ENCODE measurements at regions of chr14 and their contacts with region 1.

Region 1: DNA sequence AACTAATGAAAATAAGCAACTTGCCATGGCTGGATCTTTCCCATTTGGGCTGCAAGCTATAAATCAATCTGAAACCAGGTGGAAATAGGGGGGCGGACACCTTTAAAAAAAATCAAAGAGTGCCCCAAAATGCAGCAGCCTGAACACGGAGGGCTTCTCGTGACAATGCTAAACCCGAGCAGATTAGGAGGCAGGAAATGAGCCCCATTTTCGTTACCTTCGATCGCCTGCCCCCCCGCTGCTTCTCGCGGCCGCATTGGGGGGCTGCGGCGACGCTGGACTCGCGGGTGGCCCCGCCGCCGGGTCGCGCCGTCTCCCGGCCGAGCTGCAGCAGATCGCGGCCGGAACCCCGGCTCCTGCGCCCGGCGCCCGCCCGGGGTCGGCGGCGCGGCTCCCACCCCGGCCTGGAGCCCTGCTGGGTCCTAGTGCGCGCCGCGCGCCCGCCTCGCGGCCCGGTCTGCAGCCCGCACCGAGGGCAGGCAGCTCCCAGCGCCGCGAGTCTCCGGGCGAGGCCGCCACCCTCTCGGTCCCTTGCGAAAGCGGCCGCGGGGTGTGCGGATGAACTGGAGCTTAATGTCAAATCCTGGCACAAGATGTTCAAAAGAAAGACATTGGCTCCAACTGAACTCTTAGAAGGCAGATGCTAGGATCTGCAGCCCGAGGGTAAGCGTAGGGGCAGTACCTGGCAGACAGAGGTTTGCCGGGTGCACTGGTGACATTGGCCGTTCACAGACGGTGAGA is 201.9 kb upstream of the FOXN3 start:
- DNase-seq: peak; percentile 92
- H3K4me3 Mint-ChIP-seq: peak overlapping the region; percentile 97
- H3K27ac Mint-ChIP-seq: peak overlapping the region; percentile 97
- H3K4me1 Mint-ChIP-seq: peaks cover 68% of the 10 kb centered on the region
- H3K27me3 Mint-ChIP-seq: no peaks in the 10 kb centered on the region

Region 2: DNA sequence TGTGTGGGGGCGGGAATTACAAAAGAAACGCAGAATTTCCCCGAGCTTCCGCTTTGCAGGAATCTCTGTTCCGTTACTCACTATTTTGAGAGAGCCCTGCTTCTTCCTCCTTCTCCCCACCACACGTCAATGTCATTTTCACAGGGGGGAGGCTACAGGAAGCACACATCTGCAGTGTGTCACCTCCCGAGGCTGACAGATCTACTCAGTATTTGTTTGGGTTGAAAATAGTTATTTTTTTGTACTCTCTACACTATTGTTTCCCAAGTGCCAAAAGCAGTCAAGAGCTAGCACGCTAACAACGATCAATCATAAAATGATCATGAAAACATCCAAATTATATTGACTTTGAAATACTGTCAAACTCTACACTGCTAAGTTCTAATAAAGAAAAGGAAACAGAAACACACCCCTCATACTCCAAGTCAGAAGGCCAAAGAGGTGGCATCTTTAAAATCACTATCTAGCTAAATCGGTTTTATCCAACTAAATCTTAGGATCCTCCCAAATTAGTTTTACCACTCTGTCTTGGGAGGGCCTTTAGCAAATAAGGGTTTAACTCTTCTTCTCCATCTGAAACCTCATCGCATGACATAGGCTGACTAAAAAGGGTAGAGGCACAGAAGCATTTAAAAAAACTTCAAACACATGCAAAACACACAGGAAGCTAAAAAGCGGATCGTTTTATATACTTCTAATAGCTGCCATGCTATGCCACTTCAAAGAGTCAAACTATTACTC is 253.8 kb before region 1 on chr14:
- intact Hi-C with region 1: loop called (anchors 5 kb)
- DNase-seq: peak; percentile 84
- H3K4me3 Mint-ChIP-seq: peak overlapping the region; percentile 80
- H3K27ac Mint-ChIP-seq: peak overlapping the region; percentile 92
- H3K4me1 Mint-ChIP-seq: peaks cover 38% of the 10 kb centered on the region
- H3K27me3 Mint-ChIP-seq: no peaks in the 10 kb centered on the region

Region 3: DNA sequence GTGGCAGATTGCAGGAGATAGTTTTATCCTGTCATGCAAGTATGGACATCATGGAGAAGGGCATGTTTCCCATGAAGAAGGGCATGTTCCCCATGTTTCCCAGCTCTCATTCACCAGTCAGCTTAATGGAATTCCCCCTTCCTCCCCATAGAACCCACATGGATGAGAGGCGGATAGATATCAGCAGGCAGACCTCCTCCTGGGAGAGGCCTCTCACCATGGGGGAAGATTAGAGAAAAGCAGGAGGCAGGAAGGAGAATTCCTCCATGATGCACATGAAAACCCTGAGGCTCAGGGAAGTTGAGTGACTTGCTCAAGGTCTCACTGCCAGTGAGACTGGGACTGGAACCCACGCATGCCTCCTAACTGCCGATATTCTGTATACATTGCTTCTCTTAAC is 109.1 kb before region 1 on chr14:
- intact Hi-C with region 1: loop called (anchors 2 kb)
- DNase-seq: no peak
- H3K4me3 Mint-ChIP-seq: peak overlapping the region; percentile 81
- H3K27ac Mint-ChIP-seq: peak overlapping the region; percentile 96
- H3K4me1 Mint-ChIP-seq: peaks cover 56% of the 10 kb centered on the region
- H3K27me3 Mint-ChIP-seq: no peaks in the 10 kb centered on the region

Region 4: DNA sequence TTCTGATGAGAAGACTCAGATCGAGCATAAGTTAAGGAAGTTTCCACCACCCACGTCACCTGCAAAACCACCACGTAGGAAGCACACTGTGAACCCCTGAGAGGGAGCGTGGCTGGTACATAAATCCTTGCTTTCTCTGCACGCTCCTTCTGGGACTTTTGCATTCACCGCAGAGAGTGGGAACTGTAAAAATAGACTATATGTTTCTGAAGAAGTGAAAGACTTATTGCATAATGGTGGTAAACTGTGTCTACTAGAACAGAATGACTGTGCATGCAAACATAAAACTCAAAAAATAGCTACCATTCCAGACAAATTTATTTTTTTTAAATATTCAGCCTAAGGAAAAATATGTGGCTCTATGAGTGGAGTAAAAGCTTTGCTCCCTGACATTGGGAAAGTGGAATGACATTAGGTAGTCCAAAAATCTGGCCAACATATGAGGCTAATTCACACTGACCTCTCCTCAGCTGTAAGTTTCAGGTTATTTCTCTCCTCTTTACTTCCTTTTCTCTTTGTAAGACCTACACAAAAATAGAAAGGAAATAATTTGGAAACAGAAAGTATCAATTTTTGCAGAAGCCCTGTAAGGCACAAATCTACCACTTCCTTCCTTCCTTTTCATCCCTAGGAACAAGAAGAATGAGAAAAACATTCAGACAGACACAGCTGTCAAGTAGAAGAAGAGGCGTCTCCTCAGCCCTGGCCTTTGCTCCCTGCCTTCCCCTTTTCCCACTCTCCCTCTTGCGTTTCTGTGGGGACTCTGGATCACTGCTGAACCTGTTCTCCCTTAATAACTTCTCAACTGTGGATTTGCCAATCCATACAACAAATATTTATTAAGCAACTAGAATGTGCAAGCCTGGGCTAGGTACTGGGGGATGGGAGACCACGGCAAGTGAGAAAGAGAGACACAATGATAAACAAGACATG is 62.4 kb after region 1 on chr14:
- intact Hi-C with region 1: loop called (anchors 1 kb)
- DNase-seq: peak; percentile 78
- H3K4me3 Mint-ChIP-seq: peak overlapping the region; percentile 80
- H3K27ac Mint-ChIP-seq: peak overlapping the region; percentile 90
- H3K4me1 Mint-ChIP-seq: peaks cover 30% of the 10 kb centered on the region
- H3K27me3 Mint-ChIP-seq: no peaks in the 10 kb centered on the region

Region 5: DNA sequence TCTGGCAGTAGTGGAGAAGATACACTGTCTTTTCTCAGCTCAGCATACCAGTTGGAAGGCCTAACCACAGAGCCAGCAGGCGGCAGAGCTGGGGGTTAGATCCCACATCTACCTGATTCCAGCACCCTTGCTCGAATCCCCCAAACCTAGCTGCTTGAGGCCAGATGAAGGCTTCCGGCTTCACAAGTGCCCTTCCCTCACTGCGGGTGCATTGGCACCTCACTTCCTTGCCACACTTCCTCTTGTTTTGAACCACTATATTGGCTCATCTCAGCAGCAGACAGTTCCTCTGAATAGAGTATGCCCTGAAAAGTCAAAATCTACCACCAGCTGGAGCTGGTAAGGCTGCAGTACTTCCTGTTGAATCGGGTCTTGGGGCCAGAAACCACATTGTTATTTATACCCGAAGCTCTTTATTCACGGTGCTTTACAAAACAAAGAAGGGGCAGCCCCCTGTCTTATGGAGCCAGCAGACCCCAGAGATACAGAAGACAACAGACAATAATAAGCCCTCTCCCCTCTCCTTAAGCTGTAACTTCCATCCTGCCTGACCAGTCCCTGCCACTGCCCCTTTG is 101.8 kb after region 1 on chr14:
- intact Hi-C with region 1: loop called (anchors 2 kb)
- DNase-seq: peak; percentile 89
- H3K4me3 Mint-ChIP-seq: peak overlapping the region; percentile 68
- H3K27ac Mint-ChIP-seq: peak overlapping the region; percentile 91
- H3K4me1 Mint-ChIP-seq: peaks cover 57% of the 10 kb centered on the region
- H3K27me3 Mint-ChIP-seq: no peaks in the 10 kb centered on the region

Region 6: DNA sequence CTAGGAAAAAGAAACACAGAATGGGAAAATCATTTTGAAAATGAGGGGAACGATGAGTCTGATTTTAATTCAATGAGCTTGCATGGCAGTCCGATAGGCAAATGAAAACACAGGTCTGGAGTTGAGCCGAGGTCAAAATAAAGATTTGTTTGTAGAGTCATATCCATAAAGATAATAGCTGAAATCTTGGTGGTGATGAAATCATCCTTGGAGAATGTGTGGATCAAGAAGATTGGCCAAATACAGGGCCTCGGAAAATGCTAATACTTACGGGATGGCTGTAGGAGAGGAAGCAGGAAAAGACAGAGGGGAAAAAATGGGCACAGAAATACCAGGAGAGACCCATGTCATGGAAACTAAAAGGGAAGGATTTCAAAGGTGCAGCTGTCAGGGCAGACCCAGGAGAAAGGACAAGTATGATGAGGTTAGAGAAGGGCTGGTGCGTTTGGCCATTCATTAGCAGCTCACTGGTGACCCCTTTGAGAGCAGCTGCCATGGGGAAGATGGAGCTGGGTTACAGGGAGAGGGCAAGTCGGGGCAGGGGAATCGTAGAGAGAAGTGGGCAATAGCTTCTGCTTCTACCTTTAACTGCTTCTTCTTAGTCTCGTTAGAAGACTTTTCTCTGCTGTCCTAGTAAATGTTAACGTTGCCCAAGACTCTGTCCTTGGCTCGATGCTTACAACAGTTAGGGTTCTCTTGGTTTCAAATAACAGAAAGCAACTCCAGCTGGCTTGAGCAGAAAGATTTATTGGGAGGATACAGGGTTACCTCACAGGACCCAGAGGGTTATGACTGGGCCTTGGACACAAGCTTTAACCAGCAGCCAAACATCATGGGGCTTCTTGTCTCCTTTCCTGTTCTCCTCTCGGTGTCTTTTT is 173.7 kb after region 1 on chr14:
- intact Hi-C with region 1: no loop called
- DNase-seq: no peak
- H3K4me3 Mint-ChIP-seq: no peak overlapping the region
- H3K27ac Mint-ChIP-seq: no peak overlapping the region
- H3K4me1 Mint-ChIP-seq: no peaks in the 10 kb centered on the region
- H3K27me3 Mint-ChIP-seq: peaks cover 10% of the 10 kb centered on the region

Region 7: DNA sequence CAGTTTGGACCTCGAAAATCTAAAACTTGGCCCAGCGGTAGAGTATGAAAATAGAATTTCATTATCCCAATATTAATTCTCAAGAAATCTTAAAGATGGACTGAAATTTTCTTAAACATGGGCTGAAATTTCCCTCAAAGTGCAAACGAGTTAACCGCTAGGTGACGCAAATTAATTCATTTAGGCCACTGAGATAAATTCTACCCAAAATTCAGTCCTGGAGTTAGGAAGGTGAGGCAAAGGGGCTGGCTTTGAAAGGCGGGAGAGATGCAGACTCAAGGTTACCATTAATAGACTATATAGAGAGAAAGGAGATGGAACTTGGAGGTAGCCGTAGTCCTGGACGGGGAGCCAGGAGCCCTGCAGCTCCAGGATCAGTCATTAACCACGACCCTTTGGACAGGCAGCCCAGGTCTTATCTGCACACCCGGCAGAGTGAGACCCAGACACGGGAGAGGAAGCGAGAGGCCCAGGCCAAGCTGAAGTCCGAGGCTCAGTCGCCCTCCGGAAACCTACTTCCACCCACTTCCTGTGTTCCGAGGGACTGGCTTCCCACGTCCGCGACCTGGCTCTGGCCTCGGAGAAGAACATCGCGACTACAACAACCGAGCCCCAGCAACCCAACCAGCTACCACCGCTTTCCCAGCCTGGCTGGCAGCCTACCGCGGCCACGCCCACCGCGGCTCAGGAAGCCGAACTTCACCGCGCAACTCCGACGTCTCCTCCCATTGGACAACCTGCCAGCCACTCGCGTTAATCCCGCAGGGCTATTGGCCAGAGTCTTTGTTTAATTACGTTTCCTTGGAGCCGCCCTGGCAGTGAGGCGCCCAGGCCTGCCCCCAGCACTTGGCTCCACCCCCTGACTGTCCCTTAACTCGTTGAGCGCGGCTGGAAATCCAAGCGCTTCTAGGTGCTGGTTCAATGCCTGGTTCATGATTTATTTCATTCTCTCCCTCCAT is 335.4 kb after region 1 on chr14 and contains the start of gene EFCAB11:
- intact Hi-C with region 1: loop called (anchors 5 kb)
- DNase-seq: peak; percentile 99
- H3K4me3 Mint-ChIP-seq: peak within 1 kb of the TSS; percentile 90
- H3K27ac Mint-ChIP-seq: peak within 1 kb of the TSS; percentile 90
- H3K4me1 Mint-ChIP-seq: peaks cover 40% of the 10 kb centered on the region
- H3K27me3 Mint-ChIP-seq: no peaks in the 10 kb centered on the region
- total RNA-seq, gene EFCAB11: 6.8 and 7.8 TPM in 2 replicates